ENCODE measurements at regions of chr1 and their contacts with region 1.

Region 1: DNA sequence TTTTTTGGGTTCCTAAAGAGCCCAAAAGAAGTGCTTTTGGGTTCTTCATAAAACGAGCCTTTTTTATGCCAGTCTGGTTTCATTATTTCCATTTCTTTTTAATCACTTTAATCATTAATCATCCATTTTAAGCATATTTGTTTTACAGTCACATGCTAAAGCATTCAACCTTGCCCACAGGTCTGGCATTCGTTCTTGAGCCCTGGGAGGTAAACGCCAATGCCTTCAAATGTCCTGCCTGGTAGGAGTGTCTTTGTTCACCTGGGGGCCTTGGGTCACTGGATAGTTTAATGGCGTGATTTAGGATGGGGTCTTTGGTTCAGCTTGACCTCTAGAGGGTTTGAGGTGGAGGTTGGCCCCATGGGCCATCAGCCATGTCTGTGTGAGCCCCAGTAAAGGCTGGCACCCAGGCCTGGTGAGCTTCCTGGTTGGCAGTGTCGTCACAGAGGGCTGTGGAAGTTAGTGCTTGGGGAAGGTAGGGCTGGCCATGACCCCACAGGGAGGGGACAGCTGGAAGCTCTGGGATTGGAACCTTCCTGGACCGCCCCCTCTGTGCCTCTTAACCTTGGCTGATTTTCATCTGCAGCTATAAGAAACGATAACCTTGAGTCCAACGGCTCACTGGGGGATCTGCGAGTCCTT is 20.2 kb downstream of the C1orf174 start:
- DNase-seq: no peak

Region 2: DNA sequence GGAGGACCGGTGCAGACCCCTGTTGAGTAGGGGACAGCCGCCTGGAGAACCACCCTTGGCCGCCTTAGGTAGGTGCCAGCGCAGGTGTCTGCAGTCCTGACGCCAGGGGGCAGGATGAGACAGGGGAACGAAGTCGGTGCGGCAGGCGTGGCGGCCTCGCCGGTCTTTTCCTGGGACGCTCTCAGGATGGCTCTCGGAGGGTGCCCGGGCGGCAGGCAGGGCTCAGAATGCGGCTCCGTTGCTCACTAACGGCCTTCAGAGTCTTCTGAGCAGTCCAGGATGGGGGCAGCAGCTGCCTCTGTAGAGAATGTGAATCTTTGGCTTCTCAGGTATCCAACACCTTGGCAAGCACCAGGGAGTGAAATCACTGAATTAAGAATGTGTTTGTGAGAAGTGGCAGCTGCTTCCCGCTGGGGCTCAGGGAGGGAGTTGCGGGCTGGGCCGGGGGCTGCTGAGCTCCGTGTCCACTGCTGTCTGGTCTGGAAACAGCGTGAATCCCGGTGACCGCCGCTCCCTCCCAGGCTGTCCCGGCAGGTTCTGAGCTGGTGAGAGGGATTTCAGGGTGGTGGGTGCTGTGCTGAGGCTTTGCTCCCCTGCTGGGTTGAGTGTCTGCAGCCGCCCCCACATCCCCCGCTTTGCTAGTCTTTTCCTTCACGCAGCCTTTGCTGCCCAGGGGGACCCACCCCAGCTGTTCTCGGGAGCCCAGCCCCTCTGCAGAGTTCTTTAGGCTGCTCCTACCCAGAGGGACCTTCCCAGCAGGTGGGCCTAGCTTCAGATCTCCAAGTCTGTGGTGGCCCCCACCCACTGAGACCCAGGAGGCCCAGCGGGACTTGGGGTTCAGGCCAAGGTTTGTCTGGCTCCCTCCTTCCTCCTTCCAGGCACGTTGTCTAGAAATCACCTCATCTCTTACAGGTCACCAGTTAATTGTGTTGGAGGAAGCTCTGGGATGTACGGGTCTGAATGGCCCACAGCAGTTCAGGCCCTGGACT is 31.2 kb after region 1 on chr1:
- intact Hi-C with region 1: loop called in 1 of 2 experiments (anchors 2 kb)
- DNase-seq: peak; percentile 87